Testis (tissue), 5 donors: ENCODE measurements at regions of chr1 and their contacts with region 1.

Region 1: GRCh38 chr1:162605225-162605927 is 26.9 kb upstream of the DDR2 start:
- DNase-seq: no peak
- H3K4me3 ChIP-seq: no peak overlapping the region
- H3K27ac ChIP-seq: no peak overlapping the region
- H3K4me1 ChIP-seq: no peaks in the 10 kb centered on the region
- H3K27me3 ChIP-seq: no peaks in the 10 kb centered on the region
- CTCF ChIP-seq: no peak
- POLR2A ChIP-seq: no peak

Region 2: DNA sequence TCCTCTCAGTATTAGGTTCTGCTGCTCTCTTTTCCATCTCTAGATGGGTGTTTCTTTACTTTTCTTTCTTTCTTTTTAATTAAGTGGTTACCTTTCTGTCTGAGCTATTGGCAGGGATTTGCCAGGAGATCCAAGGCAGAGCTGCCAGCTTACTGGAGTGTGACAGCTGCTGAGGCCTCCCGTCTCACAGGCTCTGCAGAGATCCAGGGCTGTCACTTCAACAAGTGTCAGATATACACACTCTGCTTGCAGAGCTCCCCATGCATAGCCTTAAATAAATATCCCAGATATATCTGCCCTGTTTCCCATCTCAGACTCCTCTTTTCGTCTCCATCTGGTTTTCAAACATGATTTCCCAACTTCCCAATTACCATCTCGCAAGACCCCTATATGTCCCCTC is 411.6 kb before region 1 on chr1:
- intact Hi-C with region 1: loop called (anchors 10 kb)
- DNase-seq: no peak
- H3K4me3 ChIP-seq: no peak overlapping the region
- H3K27ac ChIP-seq: no peak overlapping the region
- H3K4me1 ChIP-seq: peaks cover 13% of the 10 kb centered on the region
- H3K27me3 ChIP-seq: no peaks in the 10 kb centered on the region
- CTCF ChIP-seq: no peak
- POLR2A ChIP-seq: no peak

Region 3: DNA sequence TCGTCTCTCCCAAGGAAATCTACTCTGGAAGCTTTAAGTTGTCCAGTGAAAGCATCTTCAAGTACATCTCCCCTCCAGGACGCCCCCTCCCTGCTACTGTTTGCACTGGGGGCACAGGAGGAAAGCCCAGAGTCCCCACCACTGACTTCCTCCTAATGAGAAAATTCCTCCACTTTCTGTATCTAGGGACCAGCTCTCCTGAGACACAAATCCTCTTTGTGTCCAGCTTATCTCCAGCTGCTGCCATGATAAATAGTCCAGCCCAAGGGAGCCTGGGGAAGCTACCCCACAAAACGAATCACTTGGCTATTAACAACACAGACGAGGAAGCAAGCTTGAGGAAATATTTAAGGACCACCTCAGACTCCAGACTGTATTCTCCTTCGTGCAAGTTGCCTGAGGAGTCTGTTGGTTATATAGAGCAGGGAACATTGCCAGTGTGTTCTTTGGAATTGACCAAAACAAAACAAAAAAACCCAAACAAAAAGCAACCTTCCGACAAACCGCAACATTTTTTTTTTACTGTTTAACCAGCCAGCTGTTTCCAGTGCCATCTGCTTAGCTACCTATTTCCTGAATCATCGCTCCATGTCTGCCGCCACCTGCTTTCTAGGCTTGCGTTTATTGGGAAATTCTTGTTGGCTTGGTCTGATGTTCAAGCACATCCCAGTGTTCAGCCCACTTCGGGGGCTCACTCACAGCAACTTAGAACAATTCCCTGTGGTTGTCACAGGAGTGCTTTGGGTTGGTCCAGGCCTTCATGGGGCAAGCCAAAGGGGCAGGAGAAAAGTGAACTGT is 216.2 kb before region 1 on chr1:
- intact Hi-C with region 1: no loop called
- DNase-seq: no peak
- H3K4me3 ChIP-seq: no peak overlapping the region
- H3K27ac ChIP-seq: peak overlapping the region in 1 of 2 donors; percentile 81
- H3K4me1 ChIP-seq: peaks cover 11% of the 10 kb centered on the region
- H3K27me3 ChIP-seq: no peaks in the 10 kb centered on the region
- CTCF ChIP-seq: no peak
- POLR2A ChIP-seq: no peak

Region 4: GRCh38 chr1:162861101-162861500 is 255.7 kb after region 1 on chr1 and contains the start of gene CCDC190:
- intact Hi-C with region 1: no loop called
- DNase-seq: no peak
- H3K4me3 ChIP-seq: no peak within 1 kb of the TSS
- H3K27ac ChIP-seq: no peak within 1 kb of the TSS
- H3K4me1 ChIP-seq: no peaks in the 10 kb centered on the region
- H3K27me3 ChIP-seq: no peaks in the 10 kb centered on the region
- CTCF ChIP-seq: no peak
- POLR2A ChIP-seq: no peak
- total RNA-seq, gene CCDC190: 0.19 to 1.2 TPM